Activated CD8-positive, alpha-beta T cell treated with anti-CD3 and anti-CD28 coated beads, Interleukin-2, amount 10 ng/mL, durations not matched to agents 7 days and 5 days (primary cell): ENCODE measurements at regions of chr16 and their contacts with region 1.

Region 1: DNA sequence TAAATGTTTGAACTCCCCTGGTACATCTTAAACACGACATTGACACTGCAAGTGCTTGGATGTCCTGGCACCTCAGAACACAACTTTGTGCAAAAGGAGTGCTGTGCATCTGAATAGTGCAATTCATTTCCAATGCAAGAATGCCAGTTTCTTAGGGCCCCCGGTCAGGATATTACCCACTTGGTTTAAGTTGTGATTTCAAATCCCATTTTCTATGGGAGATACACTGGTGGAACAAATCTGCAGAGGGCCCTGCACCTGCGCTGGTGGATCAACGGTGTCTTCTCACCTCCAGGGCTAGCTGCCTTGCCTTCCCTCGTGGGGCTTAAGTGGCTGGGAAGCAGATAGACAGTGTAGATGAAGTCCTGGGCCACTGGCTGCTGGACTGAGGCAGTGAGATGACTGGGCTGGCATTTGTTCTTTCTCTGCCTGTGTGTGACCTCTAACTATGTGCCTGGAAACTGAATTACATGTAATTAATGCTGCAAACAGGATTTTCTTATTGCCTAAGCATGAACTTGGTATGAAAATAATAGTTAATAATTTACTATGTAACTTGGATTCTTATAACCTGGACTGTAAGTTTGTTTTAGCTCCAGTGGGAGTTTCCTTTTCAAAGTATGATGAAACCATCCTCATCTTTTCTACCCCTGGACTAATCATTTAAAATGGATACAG is 20.9 kb downstream of the HAPSTR1 start:
- DNase-seq: no peak
- ATAC-seq: no peak
- H3K4me3 Mint-ChIP-seq: no peak overlapping the region
- H3K27ac Mint-ChIP-seq: peak overlapping the region; percentile 7
- H3K4me1 Mint-ChIP-seq: peaks cover 78% of the 10 kb centered on the region
- H3K27me3 Mint-ChIP-seq: no peaks in the 10 kb centered on the region

Region 2: DNA sequence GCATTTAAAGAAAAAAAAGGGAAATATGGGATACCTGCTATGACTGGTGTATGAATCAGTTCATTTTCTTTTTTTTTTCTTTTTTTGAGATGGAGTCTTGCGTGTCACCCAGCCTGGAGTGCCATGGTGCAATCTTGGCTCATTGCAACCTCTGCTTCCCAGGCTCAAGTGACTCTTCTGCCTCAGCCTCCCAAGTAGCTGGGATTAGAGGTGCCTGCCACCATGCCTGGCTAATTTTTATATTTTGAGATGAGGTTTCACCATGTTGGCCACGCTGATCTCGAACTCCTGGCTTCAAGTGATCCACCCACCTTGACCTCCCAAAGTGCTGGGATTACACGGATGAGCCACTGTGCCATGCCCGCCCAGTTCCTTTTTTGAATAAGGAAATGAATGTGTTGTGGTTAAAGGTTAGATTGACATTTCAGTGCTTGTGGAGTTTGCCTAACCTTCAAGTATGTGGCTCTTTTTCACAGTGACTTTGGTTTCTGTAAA is 13.1 kb before region 1 on chr16:
- CTCF ChIA-PET with region 1: interaction called, 5 read pairs
- POLR2A ChIA-PET with region 1: interaction called, 15 read pairs
- DNase-seq: no peak
- ATAC-seq: peak; percentile 11
- H3K4me3 Mint-ChIP-seq: peak overlapping the region; percentile 57
- H3K27ac Mint-ChIP-seq: peak overlapping the region; percentile 69
- H3K4me1 Mint-ChIP-seq: peaks cover 88% of the 10 kb centered on the region
- H3K27me3 Mint-ChIP-seq: no peaks in the 10 kb centered on the region

Region 3: DNA sequence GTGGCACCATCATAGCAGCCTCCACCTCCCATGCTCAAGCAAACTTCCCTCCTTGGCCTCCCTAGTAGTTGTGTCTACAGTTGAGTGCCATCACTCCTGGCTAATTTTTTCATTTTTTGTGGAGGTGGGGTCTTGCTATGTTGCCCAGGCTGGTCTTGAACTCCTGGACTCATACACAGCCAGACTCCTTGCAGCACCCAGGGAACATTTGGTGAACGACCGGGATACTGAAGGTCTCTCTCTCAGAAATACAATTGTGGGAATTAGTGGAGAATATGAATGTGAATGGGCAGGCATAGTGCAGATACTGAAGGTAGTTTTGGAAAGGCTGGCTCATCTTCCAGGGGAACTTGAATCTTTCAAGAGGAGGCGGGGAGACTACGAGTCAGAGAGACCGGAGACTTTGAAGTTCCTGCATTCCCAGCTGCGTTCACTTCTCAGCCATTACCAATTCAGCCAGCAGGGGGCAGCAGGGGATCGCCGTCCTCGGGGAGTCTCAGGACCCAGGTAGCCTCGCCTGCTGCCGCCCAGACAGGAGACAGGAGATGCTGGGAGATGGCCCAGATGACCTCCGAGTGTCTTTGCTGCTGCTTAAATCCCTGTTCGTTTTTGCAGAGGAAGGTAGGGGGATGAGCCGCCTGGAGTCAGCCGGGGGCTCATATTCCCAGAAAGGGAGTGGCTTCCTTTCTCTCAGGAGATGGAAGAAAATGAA is 47.7 kb after region 1 on chr16:
- CTCF ChIA-PET with region 1: no interaction called
- POLR2A ChIA-PET with region 1: no interaction called
- DNase-seq: peak; percentile 47
- ATAC-seq: peak; percentile 53
- H3K4me3 Mint-ChIP-seq: no peak overlapping the region
- H3K27ac Mint-ChIP-seq: no peak overlapping the region
- H3K4me1 Mint-ChIP-seq: no peaks in the 10 kb centered on the region
- H3K27me3 Mint-ChIP-seq: peaks cover 3% of the 10 kb centered on the region